ENCODE measurements at regions of chr2 and their contacts with region 1.

Region 1: GRCh38 chr2:239991689-239992314 is 33.3 kb downstream of the NDUFA10 start:
- DNase-seq: peak; percentile 15 to 60
- ATAC-seq: peak in 1 of 2 experiments; percentile 75; a peak in 4 of 6 replicates
- H3K4me3 ChIP-seq: no peak overlapping the region
- H3K27ac ChIP-seq: no peak overlapping the region
- H3K4me1 ChIP-seq: no peaks in the 10 kb centered on the region
- CTCF ChIP-seq: peak; percentile 92
- EP300 ChIP-seq: no peak
- POLR2A ChIP-seq: no peak
- RAD21 ChIP-seq: peak; percentile 81 to 89

Region 2: DNA sequence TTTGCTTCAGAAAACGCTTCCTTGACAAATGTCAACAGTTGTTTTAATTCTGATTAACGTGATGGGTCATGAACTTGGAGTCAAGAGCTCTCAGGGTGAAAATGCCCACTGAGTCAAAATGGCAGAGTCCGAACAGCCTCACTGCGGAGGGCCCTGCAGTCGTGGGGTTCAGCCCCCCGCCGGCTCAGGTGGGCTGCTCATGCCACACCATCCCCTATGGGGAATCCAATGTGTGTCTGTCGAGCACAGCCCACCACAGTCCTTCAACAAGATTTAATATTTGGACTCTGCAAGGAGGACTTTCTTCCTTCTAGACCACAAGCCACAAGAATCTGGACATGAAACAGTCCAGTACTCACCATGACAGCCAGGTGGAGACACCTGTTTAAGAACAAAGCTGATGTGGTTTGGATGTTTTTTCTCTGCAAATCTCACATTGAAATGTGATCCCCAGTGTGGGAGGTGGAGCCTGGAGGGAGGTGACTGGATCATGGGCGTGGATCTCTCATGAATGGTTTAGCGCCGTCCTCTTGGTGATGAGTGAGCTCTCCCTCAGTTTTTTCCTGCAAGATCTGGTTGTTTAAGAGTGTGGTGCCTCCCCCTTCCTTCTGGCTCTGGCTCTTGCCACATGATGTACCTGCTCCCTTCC is 167.6 kb before region 1 on chr2:
- CTCF ChIA-PET with region 1: interaction called, 13 read pairs
- POLR2A ChIA-PET with region 1: no interaction called
- DNase-seq: peak; percentile 19 to 65
- ATAC-seq: peak; percentile 48 to 71; a peak in 4 of 6 replicates
- H3K4me3 ChIP-seq: no peak overlapping the region
- H3K27ac ChIP-seq: no peak overlapping the region
- H3K4me1 ChIP-seq: no peaks in the 10 kb centered on the region
- CTCF ChIP-seq: peak; percentile 40
- EP300 ChIP-seq: no peak
- POLR2A ChIP-seq: no peak
- RAD21 ChIP-seq: peak; percentile 38 to 44; a peak in 3 of 5 replicates

Region 3: GRCh38 chr2:239970004-239970623 is 21.7 kb before region 1 on chr2:
- CTCF ChIA-PET with region 1: interaction called, 23 read pairs
- POLR2A ChIA-PET with region 1: no interaction called
- DNase-seq: peak; percentile 9 to 24
- ATAC-seq: no peak
- H3K4me3 ChIP-seq: no peak overlapping the region
- H3K27ac ChIP-seq: no peak overlapping the region
- H3K4me1 ChIP-seq: no peaks in the 10 kb centered on the region
- CTCF ChIP-seq: no peak
- EP300 ChIP-seq: no peak
- POLR2A ChIP-seq: no peak
- RAD21 ChIP-seq: no peak

Region 4: DNA sequence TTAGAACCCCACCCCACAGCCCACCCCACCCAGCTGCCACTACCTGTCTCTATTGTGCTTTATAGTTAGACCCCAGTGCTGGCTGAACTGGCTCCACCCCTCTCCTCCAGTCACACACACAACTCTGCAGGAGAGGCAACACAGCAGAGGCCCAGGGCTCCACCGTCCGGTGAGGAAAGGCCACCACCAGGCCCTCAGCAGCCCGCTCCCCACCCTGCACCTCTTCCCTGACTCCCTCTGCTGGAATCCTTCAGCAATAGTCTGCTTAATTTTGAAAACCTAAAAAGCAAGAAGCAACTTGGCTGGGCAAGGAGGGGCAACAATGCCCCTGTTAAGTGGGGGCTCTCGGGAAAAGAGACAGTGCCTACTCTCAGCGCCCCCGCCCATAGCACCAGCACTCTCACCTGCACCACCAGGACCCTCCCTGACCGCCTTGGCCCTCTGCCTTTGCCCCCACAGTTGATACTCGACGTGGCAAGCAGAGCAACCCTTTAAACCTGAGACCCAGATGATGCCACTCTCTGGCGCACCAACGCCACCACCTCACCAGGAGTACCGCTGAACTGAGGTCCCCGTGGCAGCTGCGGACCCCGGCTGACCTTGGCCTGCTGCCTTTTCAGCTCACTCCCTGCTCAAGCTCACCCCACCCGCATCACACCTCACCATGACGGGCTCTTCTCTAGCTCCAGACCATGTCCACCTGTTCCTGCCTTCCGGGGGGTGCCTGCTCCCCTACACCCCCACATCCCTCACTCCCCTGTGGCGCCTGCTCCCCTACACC is 12.4 kb before region 1 on chr2:
- CTCF ChIA-PET with region 1: interaction called, 12 read pairs
- POLR2A ChIA-PET with region 1: no interaction called
- DNase-seq: no peak
- ATAC-seq: no peak
- H3K4me3 ChIP-seq: no peak overlapping the region
- H3K27ac ChIP-seq: no peak overlapping the region
- H3K4me1 ChIP-seq: no peaks in the 10 kb centered on the region
- CTCF ChIP-seq: no peak
- EP300 ChIP-seq: no peak
- POLR2A ChIP-seq: no peak
- RAD21 ChIP-seq: no peak

Region 5: DNA sequence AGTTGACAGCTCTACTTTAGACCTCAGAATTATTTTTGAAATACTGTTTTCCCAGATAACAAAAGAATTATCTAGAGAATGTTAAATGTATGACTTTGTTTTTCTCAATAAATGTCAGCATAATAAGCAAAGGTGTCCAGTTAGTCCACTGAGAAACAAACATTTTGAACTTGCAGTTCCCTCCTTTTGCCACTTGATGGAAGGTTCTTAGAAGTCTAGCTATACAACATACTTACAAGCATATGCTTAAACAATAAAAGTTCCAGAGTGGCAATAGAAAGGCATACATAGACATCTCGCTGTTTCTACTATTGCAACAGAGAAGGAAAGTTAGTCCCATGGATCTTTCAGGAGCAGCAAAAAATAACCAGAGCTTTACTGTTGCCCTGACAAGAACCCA is 21.5 kb after region 1 on chr2:
- CTCF ChIA-PET with region 1: interaction called, 17 read pairs
- POLR2A ChIA-PET with region 1: no interaction called
- DNase-seq: peak in 1 of 2 experiments; percentile 29
- ATAC-seq: peak; percentile 79 to 83
- H3K4me3 ChIP-seq: no peak overlapping the region
- H3K27ac ChIP-seq: no peak overlapping the region
- H3K4me1 ChIP-seq: no peaks in the 10 kb centered on the region
- CTCF ChIP-seq: no peak
- EP300 ChIP-seq: no peak
- POLR2A ChIP-seq: no peak
- RAD21 ChIP-seq: no peak

Region 6: GRCh38 chr2:240021488-240022104 is 29.8 kb after region 1 on chr2:
- CTCF ChIA-PET with region 1: interaction called, 14 read pairs
- POLR2A ChIA-PET with region 1: no interaction called
- DNase-seq: peak; percentile 69 to 81
- ATAC-seq: peak; percentile 73 to 78; a peak in 5 of 6 replicates
- H3K4me3 ChIP-seq: no peak overlapping the region
- H3K27ac ChIP-seq: no peak overlapping the region
- H3K4me1 ChIP-seq: peaks cover 12% of the 10 kb centered on the region
- CTCF ChIP-seq: peak; percentile 67
- EP300 ChIP-seq: no peak
- POLR2A ChIP-seq: no peak
- RAD21 ChIP-seq: peak; percentile 28 to 38; a peak in 2 of 5 replicates

Measured in A549 (cell line).